Activated T-helper 1 cell treated with anti-CD3 and anti-CD28 coated beads, Interleukin-12 subunit alpha, Interleukin-12 subunit beta, Interleukin-2, Interleukin-4 antibody, amounts not matched to agents 30 ng/mL and 10 ng/mL and 1 ng/mL, durations not matched to agents 14 hours and 24 hours and 36 hours (primary cell): ENCODE measurements at regions of chr19 and their contacts with region 1.

Region 1: GRCh38 chr19:13060964-13061927 is 41.4 kb downstream of the LYL1 start:
- DNase-seq: peak; percentile 68
- H3K4me3 Mint-ChIP-seq: peak overlapping the region; percentile 62
- H3K27ac Mint-ChIP-seq: no peak overlapping the region
- H3K4me1 Mint-ChIP-seq: peaks cover 6% of the 10 kb centered on the region
- H3K27me3 Mint-ChIP-seq: peaks cover 25% of the 10 kb centered on the region

Region 2: GRCh38 chr19:12965017-12965811 is 96.0 kb before region 1 on chr19:
- intact Hi-C with region 1: loop called (anchors 1 kb)
- DNase-seq: peak; percentile 75
- H3K4me3 Mint-ChIP-seq: peak overlapping the region; percentile 84
- H3K27ac Mint-ChIP-seq: peak overlapping the region; percentile 84
- H3K4me1 Mint-ChIP-seq: peaks cover 16% of the 10 kb centered on the region
- H3K27me3 Mint-ChIP-seq: peaks cover 5% of the 10 kb centered on the region

Region 3: GRCh38 chr19:13033819-13034611 is 27.2 kb before region 1 on chr19:
- intact Hi-C with region 1: loop called (anchors 2 kb)
- DNase-seq: no peak
- H3K4me3 Mint-ChIP-seq: no peak overlapping the region
- H3K27ac Mint-ChIP-seq: no peak overlapping the region
- H3K4me1 Mint-ChIP-seq: no peaks in the 10 kb centered on the region
- H3K27me3 Mint-ChIP-seq: peaks cover 9% of the 10 kb centered on the region

Region 4: DNA sequence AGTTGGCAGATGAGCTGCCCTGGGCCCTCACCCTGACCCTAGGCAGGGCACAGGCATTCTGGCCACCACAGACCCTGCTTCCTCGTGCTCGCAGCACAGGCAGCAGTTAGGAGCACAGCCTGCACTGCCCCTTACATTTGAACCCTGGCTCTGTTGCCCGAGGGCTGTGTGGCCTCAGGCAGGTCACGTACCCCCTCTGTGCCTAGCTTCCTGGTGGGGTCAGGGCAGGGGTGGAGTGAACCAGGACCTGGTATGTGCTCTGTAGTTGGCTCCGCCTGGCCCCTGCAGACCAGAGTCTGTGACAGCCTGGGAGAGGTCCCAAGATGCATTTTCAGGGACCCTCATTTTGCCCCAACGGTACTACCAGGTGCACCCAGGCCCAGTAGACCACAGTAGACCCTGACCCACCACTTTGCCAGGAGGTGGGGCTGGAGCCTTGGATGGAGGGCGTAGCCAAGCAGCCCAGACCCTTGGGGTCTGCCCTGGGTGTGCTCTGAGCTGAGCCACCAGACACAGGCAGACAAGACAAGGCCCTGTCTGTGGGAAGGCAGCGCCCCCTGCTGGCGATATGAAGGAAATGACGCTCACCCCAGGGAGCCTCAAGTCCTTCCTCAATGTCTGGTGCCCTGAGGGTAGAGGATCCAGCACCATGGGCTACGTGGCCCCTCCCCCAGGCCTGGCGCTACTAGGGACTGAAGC is 32.3 kb after region 1 on chr19:
- intact Hi-C with region 1: loop called (anchors 1 kb)
- DNase-seq: peak; percentile 63
- H3K4me3 Mint-ChIP-seq: no peak overlapping the region
- H3K27ac Mint-ChIP-seq: no peak overlapping the region
- H3K4me1 Mint-ChIP-seq: peaks cover 12% of the 10 kb centered on the region
- H3K27me3 Mint-ChIP-seq: peaks cover 19% of the 10 kb centered on the region